Natural killer cell (primary cell): ENCODE measurements at regions of chr18 and their contacts with region 1.

Region 1: DNA sequence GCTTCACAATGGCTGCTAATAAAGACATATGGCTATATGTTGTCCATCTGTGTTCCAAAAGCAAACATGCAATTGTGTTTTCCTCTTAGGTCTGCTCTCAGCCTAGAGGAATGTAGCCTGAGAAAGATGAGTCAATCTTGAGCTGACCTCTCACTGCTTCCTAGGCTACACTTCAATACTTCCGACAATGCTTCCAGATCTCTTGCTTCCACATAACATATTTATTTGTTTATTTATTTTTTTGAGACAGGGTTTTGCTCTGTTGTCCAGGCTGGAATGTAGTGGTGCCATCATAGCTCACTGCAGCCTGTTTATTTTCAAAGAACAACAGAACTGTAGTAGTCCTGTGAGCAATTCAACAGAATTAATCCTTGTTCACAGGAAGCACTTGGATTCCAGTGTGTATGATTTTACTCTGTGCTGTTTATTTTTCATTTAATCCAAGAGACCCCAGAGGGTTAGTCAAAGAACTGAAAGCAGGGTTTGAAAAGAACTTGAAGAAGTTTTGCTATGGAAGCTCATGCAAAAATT is 437.9 kb downstream of the TXNL1 start:
- DNase-seq: no peak
- ATAC-seq: no peak
- H3K4me3 ChIP-seq: no peak overlapping the region
- H3K4me3 Mint-ChIP-seq: no peak overlapping the region
- H3K27ac ChIP-seq: no peak overlapping the region
- H3K27ac Mint-ChIP-seq: no peak overlapping the region
- H3K4me1 ChIP-seq: no peaks in the 10 kb centered on the region
- H3K4me1 Mint-ChIP-seq: no peaks in the 10 kb centered on the region
- H3K27me3 ChIP-seq: no peaks in the 10 kb centered on the region
- H3K27me3 Mint-ChIP-seq: no peaks in the 10 kb centered on the region
- CTCF ChIP-seq: no peak

Region 2: DNA sequence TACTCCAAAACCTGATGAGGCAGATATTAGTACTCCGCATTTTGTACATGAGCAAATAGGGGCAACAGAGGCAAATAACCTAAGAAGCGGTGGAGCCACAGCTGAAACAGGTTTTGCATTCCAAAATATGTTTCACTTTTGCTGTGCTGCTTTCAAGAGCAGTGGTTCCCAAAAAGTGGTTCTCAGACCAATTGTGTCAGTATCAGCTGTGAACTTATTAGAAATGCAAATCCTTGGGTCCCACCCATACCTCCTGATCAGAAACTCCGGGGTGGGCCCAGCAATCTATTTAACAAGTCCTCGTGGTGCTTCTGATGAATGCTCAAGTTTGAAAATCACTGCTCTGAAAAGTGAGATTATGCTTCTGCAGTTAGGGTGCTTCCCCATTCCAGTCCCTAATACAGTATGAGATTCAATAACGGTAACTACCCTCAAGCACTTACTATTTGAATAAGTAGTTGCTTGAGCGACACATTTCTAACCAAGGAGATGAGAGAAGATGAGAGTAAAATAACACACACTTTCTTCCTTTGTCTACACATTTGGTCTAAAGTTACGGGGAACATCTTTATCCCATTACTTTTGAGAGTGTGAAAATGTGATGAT is 594.6 kb before region 1 on chr18:
- intact Hi-C with region 1: no loop called
- DNase-seq: no peak
- ATAC-seq: no peak
- H3K4me3 ChIP-seq: no peak overlapping the region
- H3K4me3 Mint-ChIP-seq: no peak overlapping the region
- H3K27ac ChIP-seq: no peak overlapping the region
- H3K27ac Mint-ChIP-seq: no peak overlapping the region
- H3K4me1 ChIP-seq: no peaks in the 10 kb centered on the region
- H3K4me1 Mint-ChIP-seq: no peaks in the 10 kb centered on the region
- H3K27me3 ChIP-seq: no peaks in the 10 kb centered on the region
- H3K27me3 Mint-ChIP-seq: peaks cover 15 to 21% of the 10 kb centered on the region in 2 donors
- CTCF ChIP-seq: no peak

Region 3: GRCh38 chr18:56139792-56140254 is 60.6 kb before region 1 on chr18:
- intact Hi-C with region 1: loop called (anchors 10 kb)
- DNase-seq: no peak
- ATAC-seq: no peak
- H3K4me3 ChIP-seq: no peak overlapping the region
- H3K4me3 Mint-ChIP-seq: no peak overlapping the region
- H3K27ac ChIP-seq: no peak overlapping the region
- H3K27ac Mint-ChIP-seq: no peak overlapping the region
- H3K4me1 ChIP-seq: no peaks in the 10 kb centered on the region
- H3K4me1 Mint-ChIP-seq: no peaks in the 10 kb centered on the region
- H3K27me3 ChIP-seq: no peaks in the 10 kb centered on the region
- H3K27me3 Mint-ChIP-seq: no peaks in the 10 kb centered on the region
- CTCF ChIP-seq: no peak